ENCODE measurements at regions of chr2 and their contacts with region 1.

Region 1: GRCh38 chr2:196291873-196292800 is 120.8 kb upstream of the STK17B start:
- DNase-seq: peak; percentile 28 to 40
- ATAC-seq: peak; percentile 72 to 82
- H3K4me3 ChIP-seq: no peak overlapping the region
- H3K27ac ChIP-seq: no peak overlapping the region
- H3K4me1 ChIP-seq: peaks cover 9 to 30% of the 10 kb centered on the region in 2 donors
- H3K27me3 ChIP-seq: no peaks in the 10 kb centered on the region
- CTCF ChIP-seq: no peak
- POLR2A ChIP-seq: no peak

Region 2: DNA sequence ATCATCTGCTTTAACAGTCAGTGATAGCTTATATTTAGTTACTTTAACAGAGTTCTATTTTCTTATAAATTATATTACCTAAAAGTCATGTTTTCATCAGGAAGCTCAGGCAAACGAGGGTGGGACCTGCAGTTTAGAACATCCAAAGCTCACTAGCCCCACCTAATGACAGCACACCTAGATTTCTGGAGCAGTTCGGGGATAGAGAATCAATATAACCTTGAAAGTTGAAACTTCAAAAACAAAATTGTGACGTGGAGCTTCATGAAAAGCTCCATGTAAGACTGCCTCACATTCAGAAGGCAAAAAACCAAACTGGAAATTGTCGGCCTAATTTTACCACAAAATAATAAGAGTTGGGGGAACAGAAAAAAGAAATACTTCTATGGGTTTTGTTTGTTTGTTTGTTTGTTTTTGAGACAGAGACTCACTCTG is 161.5 kb after region 1 on chr2:
- in situ Hi-C with region 1: loop called in 1 of 4 experiments (anchors 10 kb)
- intact Hi-C with region 1: loop called (anchors 5 kb)
- DNase-seq: no peak
- ATAC-seq: no peak
- H3K4me3 ChIP-seq: no peak overlapping the region
- H3K27ac ChIP-seq: no peak overlapping the region
- H3K4me1 ChIP-seq: no peaks in the 10 kb centered on the region
- H3K27me3 ChIP-seq: no peaks in the 10 kb centered on the region
- CTCF ChIP-seq: peak in 3 of 5 experiments; percentile 19 to 46 (median 37)
- POLR2A ChIP-seq: no peak

Measured in gastrocnemius medialis (tissue), 4 donors.